H1 (cell line): ENCODE measurements at regions of chr9 and their contacts with region 1.

Region 1: GRCh38 chr9:131954299-131954698 is 125.4 kb downstream of the MED27 start:
- DNase-seq: no peak
- H3K4me3 ChIP-seq: no peak overlapping the region
- H3K27ac ChIP-seq: no peak overlapping the region
- H3K4me1 ChIP-seq: peaks cover 0 to 5% (median 1%) of the 10 kb centered on the region in 4 experiments; a peak in 2 of 7 replicates
- H3K27me3 ChIP-seq: no peaks in the 10 kb centered on the region
- CTCF ChIP-seq: peak in 2 of 3 experiments; percentile 72; a peak in 3 of 4 replicates
- EP300 ChIP-seq: no peak
- POLR2A ChIP-seq: no peak
- RAD21 ChIP-seq: peak; percentile 70 to 81

Region 2: DNA sequence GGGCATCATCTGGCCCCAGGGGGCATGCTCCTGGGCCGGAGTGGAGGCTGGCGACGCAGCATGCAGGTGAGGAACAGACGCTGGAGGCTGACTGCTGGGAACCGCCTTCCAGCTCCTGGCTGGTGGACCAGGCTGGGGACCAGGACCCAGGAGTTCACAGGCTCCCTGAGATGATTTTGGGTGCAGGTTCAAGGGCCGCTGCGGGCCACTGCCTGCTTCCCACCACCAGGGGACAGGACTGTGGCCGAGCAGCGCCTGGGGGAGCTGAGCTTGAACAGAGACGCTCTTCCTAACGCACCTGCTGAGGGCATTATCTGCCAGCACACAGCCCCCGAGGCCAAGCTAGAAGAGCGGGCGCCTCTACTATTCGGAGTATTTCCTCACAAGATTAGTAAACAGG is 82.3 kb before region 1 on chr9:
- CTCF ChIA-PET with region 1: interaction called, 18 read pairs
- POLR2A ChIA-PET with region 1: no interaction called
- DNase-seq: no peak
- H3K4me3 ChIP-seq: no peak overlapping the region
- H3K27ac ChIP-seq: no peak overlapping the region
- H3K4me1 ChIP-seq: peaks cover 6 to 12% (median 10%) of the 10 kb centered on the region in 4 experiments; a peak in 6 of 7 replicates
- H3K27me3 ChIP-seq: no peaks in the 10 kb centered on the region; a peak in 1 of 7 replicates
- CTCF ChIP-seq: peak; percentile 81 to 91 (median 89)
- EP300 ChIP-seq: no peak
- POLR2A ChIP-seq: no peak
- RAD21 ChIP-seq: peak; percentile 67 to 77

Region 3: DNA sequence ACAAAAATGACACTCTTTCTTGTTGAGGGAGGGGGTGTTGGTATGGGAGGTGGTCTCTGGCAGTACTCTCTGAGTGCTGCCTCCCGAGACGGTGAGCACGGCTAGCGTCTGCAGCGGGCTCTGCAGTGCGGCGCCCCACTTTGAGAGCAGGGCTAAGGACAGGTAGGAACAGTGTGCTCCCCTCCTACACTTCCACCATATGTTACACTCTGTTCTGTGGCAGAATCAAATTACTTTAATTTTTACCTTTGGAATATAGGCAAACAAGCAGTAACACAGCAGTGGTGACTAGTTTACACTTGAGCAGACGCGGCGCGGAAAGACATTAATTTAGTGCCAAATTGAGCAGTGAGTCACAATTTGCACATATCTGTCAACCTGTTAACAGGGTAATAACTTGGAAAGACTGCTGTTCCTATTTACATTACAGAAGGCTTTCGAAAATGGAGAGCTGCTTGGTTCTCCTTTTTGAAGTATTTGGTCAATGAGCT is 10.9 kb before region 1 on chr9:
- CTCF ChIA-PET with region 1: interaction called, 18 read pairs
- POLR2A ChIA-PET with region 1: interaction called, 3 read pairs
- DNase-seq: no peak
- H3K4me3 ChIP-seq: peak overlapping the region in 1 of 4 experiments; percentile 5; a peak in 1 of 8 replicates
- H3K27ac ChIP-seq: peak overlapping the region; percentile 5; the same call in 1 of the 2 replicates
- H3K4me1 ChIP-seq: peaks cover 0 to 17% (median 9%) of the 10 kb centered on the region in 4 experiments; a peak in 5 of 7 replicates
- H3K27me3 ChIP-seq: no peaks in the 10 kb centered on the region
- CTCF ChIP-seq: no peak
- EP300 ChIP-seq: no peak
- POLR2A ChIP-seq: no peak
- RAD21 ChIP-seq: no peak

Region 4: GRCh38 chr9:131987232-131987631 is 32.9 kb after region 1 on chr9:
- CTCF ChIA-PET with region 1: interaction called, 13 read pairs
- POLR2A ChIA-PET with region 1: no interaction called
- DNase-seq: no peak
- H3K4me3 ChIP-seq: no peak overlapping the region
- H3K27ac ChIP-seq: no peak overlapping the region
- H3K4me1 ChIP-seq: peaks cover 0 to 6% (median 3%) of the 10 kb centered on the region in 4 experiments; a peak in 2 of 7 replicates
- H3K27me3 ChIP-seq: no peaks in the 10 kb centered on the region
- CTCF ChIP-seq: no peak
- EP300 ChIP-seq: no peak
- POLR2A ChIP-seq: no peak
- RAD21 ChIP-seq: no peak